Keratinocyte (primary cell): ENCODE measurements at regions of chr19 and their contacts with region 1.

Region 1: DNA sequence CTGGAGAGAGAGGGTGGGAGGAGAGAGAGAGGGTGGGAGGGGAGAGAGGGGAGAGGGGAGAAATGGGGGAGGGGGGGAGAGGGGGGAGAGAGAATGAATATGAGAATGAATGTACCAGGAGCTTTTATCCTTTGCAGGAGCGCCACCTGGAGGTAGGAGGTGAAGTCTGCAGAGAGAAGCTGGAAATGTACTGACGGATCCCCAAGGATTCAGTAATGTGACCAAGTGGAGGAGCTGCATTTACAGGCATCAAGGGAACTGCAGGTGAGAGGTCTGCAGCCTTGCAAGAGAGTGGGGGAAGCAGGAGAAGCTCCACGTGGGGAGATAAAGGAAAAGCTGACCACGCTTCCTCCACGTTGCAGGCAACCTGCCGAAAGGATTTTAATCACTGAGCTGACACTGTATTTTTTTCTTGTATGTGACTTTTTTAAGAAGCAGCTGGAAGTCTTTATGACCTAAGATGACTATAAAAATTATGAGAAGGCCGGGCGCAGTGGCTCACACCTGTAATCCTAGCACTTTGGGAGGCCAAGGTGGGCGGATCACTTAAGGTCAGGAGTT is 33.7 kb downstream of the VSTM1 start:
- DNase-seq: no peak
- H3K4me3 ChIP-seq: no peak overlapping the region
- H3K27ac ChIP-seq: no peak overlapping the region
- H3K4me1 ChIP-seq: no peaks in the 10 kb centered on the region
- H3K27me3 ChIP-seq: no peaks in the 10 kb centered on the region
- CTCF ChIP-seq: peak; percentile 53 to 69 (median 69)

Region 2: GRCh38 chr19:53927739-53928138 is 102.3 kb before region 1 on chr19:
- dilution Hi-C with region 1: loop called (anchors 25 kb)
- DNase-seq: no peak
- H3K4me3 ChIP-seq: no peak overlapping the region
- H3K27ac ChIP-seq: no peak overlapping the region
- H3K4me1 ChIP-seq: no peaks in the 10 kb centered on the region
- H3K27me3 ChIP-seq: no peaks in the 10 kb centered on the region
- CTCF ChIP-seq: no peak

Region 3: DNA sequence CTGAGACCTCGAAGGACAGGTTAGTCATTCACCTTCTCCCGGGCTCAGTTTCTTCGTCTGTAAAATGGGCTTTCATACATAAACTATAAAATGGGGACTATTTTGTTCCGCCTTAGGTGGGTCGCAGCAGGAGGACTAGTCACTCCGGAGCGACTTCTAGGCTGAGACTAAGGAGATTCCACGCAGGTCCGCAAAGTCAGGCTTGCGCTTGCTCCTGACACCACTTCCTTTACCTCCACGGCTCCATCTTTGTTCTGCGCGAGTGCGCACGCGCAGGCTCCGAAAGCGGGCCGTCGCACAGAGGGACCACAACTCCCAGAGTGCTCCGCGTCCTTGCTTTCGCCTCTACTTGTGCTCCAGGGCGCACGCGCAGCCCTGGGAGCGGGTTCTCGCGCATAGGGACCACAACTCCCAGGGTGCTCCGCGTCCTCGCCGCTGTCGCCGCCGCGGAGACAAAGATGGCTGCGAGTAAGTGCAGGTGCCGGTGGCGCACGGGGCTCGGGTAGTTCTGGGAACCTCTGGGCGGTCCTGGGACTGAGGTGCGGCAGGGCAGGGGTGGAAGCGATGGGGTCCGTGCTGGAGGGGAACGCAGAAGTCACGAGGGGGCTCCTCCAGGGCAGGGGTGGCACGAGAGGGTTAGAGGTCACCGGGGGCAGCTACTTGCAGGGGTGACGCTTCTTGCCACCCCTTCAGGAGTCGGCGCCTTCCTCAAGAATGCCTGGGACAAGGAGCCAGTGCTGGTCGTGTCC is 72.6 kb after region 1 on chr19 and contains the start of gene NDUFA3:
- dilution Hi-C with region 1: no loop called
- DNase-seq: peak; percentile 92
- H3K4me3 ChIP-seq: peak within 1 kb of the TSS; percentile 78 to 94 (median 93)
- H3K27ac ChIP-seq: peak within 1 kb of the TSS; percentile 40
- H3K4me1 ChIP-seq: peaks cover 4% of the 10 kb centered on the region
- H3K27me3 ChIP-seq: no peaks in the 10 kb centered on the region
- CTCF ChIP-seq: no peak
- polyA plus RNA-seq, gene NDUFA3: 41.9 to 61.4 TPM (median 44.5 TPM) in 3 replicates